Activated CD8-positive, alpha-beta T cell treated with anti-CD3 and anti-CD28 coated beads, Interleukin-2, amount 10 ng/mL, durations not matched to agents 7 days and 5 days (primary cell): ENCODE measurements at regions of chr5 and their contacts with region 1.

Region 1: DNA sequence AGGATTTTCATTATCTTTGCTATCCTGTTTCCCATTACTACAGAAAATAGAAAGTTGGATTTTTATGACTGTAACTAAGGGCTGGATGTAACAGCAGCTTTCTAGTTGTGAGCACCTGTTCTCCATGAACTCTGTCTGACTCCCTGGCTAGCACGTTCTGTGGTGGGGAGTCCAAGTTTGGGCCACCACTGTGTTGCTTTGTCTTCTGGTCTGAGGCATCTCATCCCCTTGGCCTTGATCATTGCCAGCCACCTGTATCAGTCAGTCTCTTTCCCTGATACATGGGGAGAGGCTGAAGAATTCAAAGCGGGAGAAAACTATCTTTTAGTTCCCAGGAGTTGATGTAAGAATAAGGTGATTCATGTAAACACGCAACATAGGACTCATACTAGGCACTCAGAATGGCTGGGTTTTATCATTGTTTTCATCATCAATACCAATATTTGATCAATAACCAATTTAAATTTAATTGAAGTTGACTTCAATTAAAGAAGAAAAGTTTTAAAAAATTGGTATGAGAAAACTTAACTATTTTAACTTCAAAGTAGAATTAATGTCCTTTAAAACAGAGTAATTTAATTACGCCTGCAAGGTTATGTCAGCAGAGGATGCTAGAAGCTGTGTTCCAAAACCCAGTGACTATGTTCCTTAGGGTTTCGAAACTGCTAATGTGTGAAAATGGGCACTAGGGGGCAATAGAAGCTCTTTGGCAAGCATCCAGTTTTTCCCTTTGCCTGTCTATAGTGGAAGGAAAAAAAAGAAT is 33.6 kb downstream of the WDR70 start:
- DNase-seq: peak; percentile 55
- ATAC-seq: peak; percentile 63
- H3K4me3 Mint-ChIP-seq: no peak overlapping the region
- H3K27ac Mint-ChIP-seq: no peak overlapping the region
- H3K4me1 Mint-ChIP-seq: no peaks in the 10 kb centered on the region
- H3K27me3 Mint-ChIP-seq: no peaks in the 10 kb centered on the region

Region 2: DNA sequence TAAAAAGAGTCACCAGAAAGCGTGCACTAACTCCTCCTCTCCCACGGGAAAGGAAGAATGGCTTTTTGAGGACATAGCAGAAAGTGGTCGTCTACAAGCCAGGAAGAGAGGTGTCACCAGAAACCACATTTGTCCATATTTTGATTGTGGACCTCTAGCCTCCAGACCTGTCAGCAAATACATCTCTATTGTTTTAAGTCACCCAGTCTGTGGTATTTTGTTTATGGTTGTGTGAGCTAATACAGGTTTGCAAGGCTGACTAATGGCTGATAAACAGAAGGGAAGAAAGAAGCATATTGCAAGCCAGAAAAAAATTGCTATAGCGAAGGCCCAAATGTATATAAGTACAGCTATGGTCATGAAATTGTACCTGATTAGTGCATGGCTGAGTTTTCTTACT is 12.2 kb before region 1 on chr5:
- CTCF ChIA-PET with region 1: interaction called, 10 read pairs
- POLR2A ChIA-PET with region 1: no interaction called
- DNase-seq: no peak
- ATAC-seq: no peak
- H3K4me3 Mint-ChIP-seq: no peak overlapping the region
- H3K27ac Mint-ChIP-seq: no peak overlapping the region
- H3K4me1 Mint-ChIP-seq: no peaks in the 10 kb centered on the region
- H3K27me3 Mint-ChIP-seq: no peaks in the 10 kb centered on the region

Region 3: GRCh38 chr5:37424441-37424840 is 11.7 kb after region 1 on chr5:
- CTCF ChIA-PET with region 1: interaction called, 11 read pairs
- POLR2A ChIA-PET with region 1: no interaction called
- DNase-seq: no peak
- ATAC-seq: no peak
- H3K4me3 Mint-ChIP-seq: no peak overlapping the region
- H3K27ac Mint-ChIP-seq: no peak overlapping the region
- H3K4me1 Mint-ChIP-seq: peaks cover 10% of the 10 kb centered on the region
- H3K27me3 Mint-ChIP-seq: no peaks in the 10 kb centered on the region